CD4-positive, alpha-beta T cell (primary cell): ENCODE measurements at regions of chr4 and their contacts with region 1.

Region 1: GRCh38 chr4:2907706-2908306 is 55.4 kb downstream of the NOP14 start:
- DNase-seq: no peak
- ATAC-seq: no peak
- H3K4me3 ChIP-seq: no peak overlapping the region
- H3K4me3 Mint-ChIP-seq: no peak overlapping the region
- H3K27ac ChIP-seq: no peak overlapping the region
- H3K27ac Mint-ChIP-seq: peak overlapping the region; percentile 30
- H3K4me1 ChIP-seq: peaks cover 28% of the 10 kb centered on the region
- H3K4me1 Mint-ChIP-seq: peaks cover 26% of the 10 kb centered on the region
- H3K27me3 ChIP-seq: no peaks in the 10 kb centered on the region
- H3K27me3 Mint-ChIP-seq: no peaks in the 10 kb centered on the region
- CTCF ChIP-seq: no peak

Region 2: DNA sequence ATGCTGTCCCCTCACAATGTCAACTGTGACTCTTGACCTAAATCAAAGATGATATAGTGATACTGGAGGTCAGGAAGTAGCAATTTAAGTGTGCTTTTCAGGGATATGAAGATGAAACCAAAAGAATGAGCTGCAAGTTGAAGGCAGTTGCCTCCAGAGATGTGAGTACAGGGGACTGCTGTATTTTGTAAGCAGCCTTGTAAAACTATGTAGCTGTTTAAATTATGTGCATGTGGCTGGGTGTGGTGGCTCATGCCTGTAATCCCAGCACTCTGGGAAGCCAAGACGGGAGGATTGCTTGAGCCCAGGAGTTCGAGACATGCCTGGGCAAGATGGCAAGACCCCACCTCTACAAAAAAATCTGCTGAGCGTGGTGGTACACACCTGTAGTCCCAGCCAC is 136.5 kb before region 1 on chr4:
- CTCF ChIA-PET with region 1: no interaction called
- POLR2A ChIA-PET with region 1: no interaction called
- intact Hi-C with region 1: no loop called
- DNase-seq: no peak
- ATAC-seq: no peak
- H3K4me3 ChIP-seq: no peak overlapping the region
- H3K4me3 Mint-ChIP-seq: no peak overlapping the region
- H3K27ac ChIP-seq: no peak overlapping the region
- H3K27ac Mint-ChIP-seq: no peak overlapping the region
- H3K4me1 ChIP-seq: peaks cover 7% of the 10 kb centered on the region
- H3K4me1 Mint-ChIP-seq: peaks cover 10% of the 10 kb centered on the region
- H3K27me3 ChIP-seq: no peaks in the 10 kb centered on the region
- H3K27me3 Mint-ChIP-seq: no peaks in the 10 kb centered on the region
- CTCF ChIP-seq: no peak

Region 3: DNA sequence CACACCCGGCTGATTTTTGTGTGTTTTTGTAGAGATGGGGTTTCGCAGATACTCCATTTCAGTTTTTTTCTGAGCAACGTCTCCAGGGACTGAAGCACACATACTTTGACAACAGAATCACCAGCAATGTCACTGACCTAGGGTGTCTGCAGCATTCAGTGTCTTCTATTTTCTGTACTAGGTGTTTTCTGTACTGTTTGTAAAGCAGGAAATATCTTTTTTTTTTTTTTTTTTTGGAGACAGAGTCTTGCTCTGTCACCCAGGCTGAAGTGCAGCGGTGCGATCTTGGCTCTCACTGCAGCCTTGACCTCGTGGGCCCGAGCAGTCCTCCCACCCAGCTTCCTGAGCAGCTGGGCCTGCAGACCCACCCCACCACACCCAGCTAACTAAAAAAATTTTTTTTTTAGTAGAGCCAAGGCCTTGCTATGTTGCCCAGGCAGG is 55.3 kb before region 1 on chr4:
- CTCF ChIA-PET with region 1: no interaction called
- POLR2A ChIA-PET with region 1: no interaction called
- intact Hi-C with region 1: loop called in 1 of 2 experiments (anchors 5 kb)
- DNase-seq: peak in 3 of 14 experiments; percentile 34 to 46 (median 40)
- ATAC-seq: peak; percentile 67
- H3K4me3 ChIP-seq: no peak overlapping the region
- H3K4me3 Mint-ChIP-seq: peak overlapping the region; percentile 26
- H3K27ac ChIP-seq: peak overlapping the region; percentile 9 to 58
- H3K27ac Mint-ChIP-seq: peak overlapping the region; percentile 82
- H3K4me1 ChIP-seq: peaks cover 53% of the 10 kb centered on the region
- H3K4me1 Mint-ChIP-seq: peaks cover 79% of the 10 kb centered on the region
- H3K27me3 ChIP-seq: no peaks in the 10 kb centered on the region
- H3K27me3 Mint-ChIP-seq: no peaks in the 10 kb centered on the region
- CTCF ChIP-seq: no peak

Region 4: DNA sequence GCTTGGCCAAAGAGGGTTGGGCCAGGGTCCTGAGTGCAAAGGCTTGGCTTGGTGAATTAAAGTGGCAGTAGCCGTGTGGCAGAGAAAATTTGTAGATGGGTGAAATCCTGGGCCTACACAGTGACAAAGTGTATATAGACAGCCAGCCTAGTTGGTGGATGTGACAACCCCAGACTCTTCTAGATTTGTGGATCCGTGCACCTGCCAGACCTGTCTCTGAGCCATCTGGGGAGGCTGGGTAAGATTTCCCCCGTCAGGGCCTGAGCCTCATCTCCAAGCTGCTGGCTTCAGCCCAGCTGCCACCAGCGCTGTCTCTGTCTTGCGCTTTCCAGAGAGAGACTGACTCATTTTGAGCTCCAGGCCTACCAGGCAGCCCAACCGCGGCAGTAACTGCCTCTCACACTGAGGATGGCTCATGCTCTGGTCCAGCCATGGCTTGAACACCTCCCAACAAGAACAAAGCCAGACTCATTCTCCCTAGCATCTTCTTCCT is 28.9 kb after region 1 on chr4:
- CTCF ChIA-PET with region 1: no interaction called
- POLR2A ChIA-PET with region 1: no interaction called
- intact Hi-C with region 1: no loop called
- DNase-seq: peak in 6 of 14 experiments; percentile 25 to 70 (median 48)
- ATAC-seq: no peak
- H3K4me3 ChIP-seq: peak overlapping the region; percentile 92
- H3K4me3 Mint-ChIP-seq: peak overlapping the region; percentile 93
- H3K27ac ChIP-seq: peak overlapping the region; percentile 49 to 87
- H3K27ac Mint-ChIP-seq: peak overlapping the region; percentile 94
- H3K4me1 ChIP-seq: peaks cover 71% of the 10 kb centered on the region
- H3K4me1 Mint-ChIP-seq: peaks cover 37% of the 10 kb centered on the region
- H3K27me3 ChIP-seq: no peaks in the 10 kb centered on the region
- H3K27me3 Mint-ChIP-seq: no peaks in the 10 kb centered on the region
- CTCF ChIP-seq: no peak

Region 5: GRCh38 chr4:2968381-2968780 is 60.6 kb after region 1 on chr4:
- CTCF ChIA-PET with region 1: no interaction called
- POLR2A ChIA-PET with region 1: no interaction called
- intact Hi-C with region 1: no loop called
- DNase-seq: no peak
- ATAC-seq: no peak
- H3K4me3 ChIP-seq: no peak overlapping the region
- H3K4me3 Mint-ChIP-seq: no peak overlapping the region
- H3K27ac ChIP-seq: no peak overlapping the region
- H3K27ac Mint-ChIP-seq: no peak overlapping the region
- H3K4me1 ChIP-seq: peaks cover 8% of the 10 kb centered on the region
- H3K4me1 Mint-ChIP-seq: peaks cover 6% of the 10 kb centered on the region
- H3K27me3 ChIP-seq: no peaks in the 10 kb centered on the region
- H3K27me3 Mint-ChIP-seq: no peaks in the 10 kb centered on the region
- CTCF ChIP-seq: no peak